ENCODE measurements at regions of chr10 and their contacts with region 1.

Region 1: GRCh38 chr10:52256832-52257691 is 57.0 kb upstream of the DKK1 start:
- DNase-seq: peak; percentile 76 to 79
- ATAC-seq: peak; percentile 85
- H3K4me3 ChIP-seq: no peak overlapping the region
- H3K27ac ChIP-seq: peak overlapping the region; percentile 76 to 94 (median 84)
- H3K4me1 ChIP-seq: peaks cover 48 to 73% of the 10 kb centered on the region in 2 donors
- H3K27me3 ChIP-seq: no peaks in the 10 kb centered on the region
- CTCF ChIP-seq: no peak
- POLR2A ChIP-seq: peak in 1 of 2 donors; percentile 45

Region 2: DNA sequence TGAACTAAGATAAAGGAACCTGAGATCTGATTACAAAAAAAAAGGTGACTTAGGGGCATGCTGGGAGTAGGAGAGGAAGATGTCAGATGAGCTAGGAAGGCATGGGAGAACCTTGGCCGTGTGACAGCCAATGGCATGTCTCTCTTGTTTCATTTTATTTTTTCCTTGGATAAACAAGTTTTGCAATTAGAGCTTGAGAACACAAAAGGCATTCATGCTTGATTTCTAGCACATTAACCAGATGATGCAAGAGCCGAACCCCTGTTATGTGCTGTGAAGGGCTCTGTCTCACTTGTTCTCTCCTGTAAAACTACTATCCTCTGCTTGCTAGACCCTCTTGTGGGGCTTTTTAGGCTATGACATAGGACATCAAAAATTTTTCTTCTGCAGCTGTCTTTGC is 1871.4 kb before region 1 on chr10:
- in situ Hi-C with region 1: no loop called
- intact Hi-C with region 1: loop called (anchors 10 kb)
- DNase-seq: peak; percentile 59 to 76
- ATAC-seq: peak; percentile 32 to 82
- H3K4me3 ChIP-seq: no peak overlapping the region
- H3K27ac ChIP-seq: peak overlapping the region; percentile 68 to 83 (median 72)
- H3K4me1 ChIP-seq: peaks cover 50% of the 10 kb centered on the region in 2 donors
- H3K27me3 ChIP-seq: no peaks in the 10 kb centered on the region
- CTCF ChIP-seq: no peak
- POLR2A ChIP-seq: no peak

Region 3: DNA sequence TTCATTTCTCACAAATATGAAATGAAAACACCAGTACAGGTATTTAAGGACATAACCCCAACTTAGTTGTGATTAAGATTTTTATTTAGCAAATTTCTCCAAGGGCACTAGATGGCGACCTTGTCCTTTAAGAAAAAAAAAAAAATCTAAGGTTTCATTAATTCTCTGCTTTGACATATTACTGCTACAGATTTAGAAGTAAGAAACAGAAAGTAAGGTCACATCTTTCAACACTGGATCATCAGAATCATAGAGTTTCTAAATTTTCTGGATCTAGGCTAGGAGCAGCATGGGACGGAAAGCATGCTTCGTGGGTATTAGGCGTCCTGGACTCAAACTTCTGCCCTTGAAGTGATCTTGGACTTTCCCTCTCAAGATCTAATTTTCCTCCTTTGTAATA is 1268.3 kb before region 1 on chr10:
- in situ Hi-C with region 1: no loop called
- intact Hi-C with region 1: loop called (anchors 5 kb)
- DNase-seq: no peak
- ATAC-seq: no peak
- H3K4me3 ChIP-seq: peak overlapping the region in 3 of 4 donors; percentile 20 to 77 (median 36)
- H3K27ac ChIP-seq: peak overlapping the region; percentile 96 to 99 (median 98)
- H3K4me1 ChIP-seq: peaks cover 11 to 17% of the 10 kb centered on the region in 2 donors
- H3K27me3 ChIP-seq: no peaks in the 10 kb centered on the region
- CTCF ChIP-seq: peak in 4 of 5 experiments; percentile 16 to 62 (median 52)
- POLR2A ChIP-seq: no peak

Region 4: GRCh38 chr10:52106899-52107298 is 150.2 kb before region 1 on chr10:
- in situ Hi-C with region 1: no loop called
- intact Hi-C with region 1: loop called (anchors 5 kb)
- DNase-seq: peak in 1 of 2 donors; percentile 17
- ATAC-seq: peak; percentile 42 to 43
- H3K4me3 ChIP-seq: no peak overlapping the region
- H3K27ac ChIP-seq: peak overlapping the region; percentile 76 to 87 (median 78)
- H3K4me1 ChIP-seq: peaks cover 35 to 44% of the 10 kb centered on the region in 2 donors
- H3K27me3 ChIP-seq: no peaks in the 10 kb centered on the region
- CTCF ChIP-seq: no peak
- POLR2A ChIP-seq: no peak

Region 5: GRCh38 chr10:52128056-52128683 is 128.9 kb before region 1 on chr10:
- in situ Hi-C with region 1: no loop called
- intact Hi-C with region 1: loop called (anchors 5 kb)
- DNase-seq: peak; percentile 78 to 88
- ATAC-seq: peak; percentile 97 to 98
- H3K4me3 ChIP-seq: peak overlapping the region; percentile 49 to 51 (median 49)
- H3K27ac ChIP-seq: peak overlapping the region; percentile 81 to 82 (median 82)
- H3K4me1 ChIP-seq: peaks cover 5 to 7% of the 10 kb centered on the region in 2 donors
- H3K27me3 ChIP-seq: no peaks in the 10 kb centered on the region
- CTCF ChIP-seq: no peak
- POLR2A ChIP-seq: peak; percentile 58 to 78

Region 6: DNA sequence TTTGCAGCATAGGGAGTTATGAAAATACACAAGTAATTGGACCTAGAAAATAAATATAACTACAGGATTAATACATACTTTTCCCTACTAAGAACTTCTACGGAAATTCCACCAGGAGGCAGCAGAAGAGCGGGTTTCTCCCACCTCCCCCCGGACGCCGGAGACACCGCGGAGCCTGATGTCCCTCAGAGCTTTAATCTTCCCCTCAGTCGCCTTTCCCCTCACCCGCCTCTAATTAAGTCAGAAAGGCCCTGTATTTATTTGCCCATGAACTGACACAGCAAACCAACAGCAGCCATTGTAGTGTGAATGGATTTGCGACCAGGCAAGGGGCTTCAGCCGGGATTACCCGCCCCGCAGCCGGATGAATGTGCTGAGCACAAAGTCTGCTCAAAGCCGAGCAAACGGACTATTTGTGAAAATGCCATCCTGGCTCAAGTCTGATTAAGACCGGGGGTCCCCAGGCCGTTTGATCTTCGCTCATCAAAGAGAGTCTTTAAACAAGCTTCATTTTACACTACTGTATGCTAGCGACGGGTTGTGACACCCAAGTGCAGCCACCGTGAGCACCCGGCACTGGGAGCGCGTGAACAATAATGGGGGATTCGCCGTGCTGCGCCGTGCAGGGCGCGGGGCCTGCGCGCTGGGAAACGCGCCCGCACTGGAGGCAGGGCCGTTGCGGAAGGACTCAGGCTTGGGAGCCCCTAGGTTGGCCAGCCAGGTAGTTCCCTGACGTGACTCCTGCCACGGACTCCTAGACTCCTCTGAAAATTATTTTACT is 51.4 kb after region 1 on chr10:
- in situ Hi-C with region 1: no loop called
- intact Hi-C with region 1: no loop called
- DNase-seq: peak; percentile 30 to 43
- ATAC-seq: peak; percentile 87 to 89
- H3K4me3 ChIP-seq: peak overlapping the region; percentile 49 to 72 (median 64)
- H3K27ac ChIP-seq: peak overlapping the region in 1 of 4 donors; percentile 40
- H3K4me1 ChIP-seq: peaks cover 5 to 10% of the 10 kb centered on the region in 2 donors
- H3K27me3 ChIP-seq: peaks cover 0 to 3% (median 0%) of the 10 kb centered on the region in 3 donors
- CTCF ChIP-seq: peak; percentile 35 to 75 (median 58)
- POLR2A ChIP-seq: no peak

Measured in gastrocnemius medialis (tissue), 4 donors.